PC-9 (cell line): ENCODE measurements at regions of chr1 and their contacts with region 1.

Region 1: GRCh38 chr1:172826096-172826743 is 167.3 kb downstream of the FASLG start:
- DNase-seq: peak; percentile 10 to 51
- H3K4me3 ChIP-seq: no peak overlapping the region
- H3K27ac ChIP-seq: no peak overlapping the region
- H3K4me1 ChIP-seq: no peaks in the 10 kb centered on the region
- H3K27me3 ChIP-seq: no peaks in the 10 kb centered on the region
- CTCF ChIP-seq: peak; percentile 76

Region 2: DNA sequence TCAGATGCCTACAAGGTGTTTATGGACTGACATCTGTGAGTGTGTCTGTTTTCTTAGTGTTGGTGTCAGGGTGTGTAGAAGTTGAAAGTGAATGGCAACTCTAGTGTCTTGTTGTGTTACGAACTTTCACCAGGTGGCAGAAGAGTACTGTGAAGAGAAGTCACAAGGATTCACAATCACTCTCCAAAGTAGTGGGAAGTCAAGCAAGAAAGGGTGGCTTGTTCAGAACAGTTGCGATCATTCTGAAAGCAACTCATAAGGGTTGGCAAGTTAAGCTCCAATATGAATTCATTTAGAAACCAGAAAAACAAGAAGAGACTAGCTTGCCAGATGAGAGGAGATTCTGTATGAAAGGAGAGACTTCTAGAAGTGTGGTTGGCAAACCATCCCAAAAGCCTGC is 81.2 kb before region 1 on chr1:
- CTCF ChIA-PET with region 1: no interaction called
- POLR2A ChIA-PET with region 1: no interaction called
- intact Hi-C with region 1: loop called (anchors 1 kb)
- DNase-seq: peak; percentile 38 to 66
- H3K4me3 ChIP-seq: no peak overlapping the region
- H3K27ac ChIP-seq: no peak overlapping the region
- H3K4me1 ChIP-seq: peaks cover 22% of the 10 kb centered on the region
- H3K27me3 ChIP-seq: 0 out of 2 replicates have a peak, but pooled peaks cover 5% of the 10 kb centered on the region
- CTCF ChIP-seq: peak; percentile 86

Region 3: GRCh38 chr1:172917972-172918371 is 91.8 kb after region 1 on chr1:
- CTCF ChIA-PET with region 1: no interaction called
- POLR2A ChIA-PET with region 1: no interaction called
- intact Hi-C with region 1: loop called (anchors 5 kb)
- DNase-seq: peak; percentile 63 to 97
- H3K4me3 ChIP-seq: peak overlapping the region; percentile 29
- H3K27ac ChIP-seq: peak overlapping the region; percentile 84
- H3K4me1 ChIP-seq: peaks cover 23% of the 10 kb centered on the region
- H3K27me3 ChIP-seq: no peaks in the 10 kb centered on the region
- CTCF ChIP-seq: no peak

Region 4: GRCh38 chr1:173062156-173062938 is 236.1 kb after region 1 on chr1:
- CTCF ChIA-PET with region 1: interaction called, 4 read pairs
- POLR2A ChIA-PET with region 1: no interaction called
- intact Hi-C with region 1: loop called (anchors 5 kb)
- DNase-seq: peak; percentile 51 to 96
- H3K4me3 ChIP-seq: no peak overlapping the region
- H3K27ac ChIP-seq: peak overlapping the region; percentile 32; the same call in 1 of the 2 replicates
- H3K4me1 ChIP-seq: peaks cover 36% of the 10 kb centered on the region
- H3K27me3 ChIP-seq: no peaks in the 10 kb centered on the region
- CTCF ChIP-seq: no peak

Region 5: DNA sequence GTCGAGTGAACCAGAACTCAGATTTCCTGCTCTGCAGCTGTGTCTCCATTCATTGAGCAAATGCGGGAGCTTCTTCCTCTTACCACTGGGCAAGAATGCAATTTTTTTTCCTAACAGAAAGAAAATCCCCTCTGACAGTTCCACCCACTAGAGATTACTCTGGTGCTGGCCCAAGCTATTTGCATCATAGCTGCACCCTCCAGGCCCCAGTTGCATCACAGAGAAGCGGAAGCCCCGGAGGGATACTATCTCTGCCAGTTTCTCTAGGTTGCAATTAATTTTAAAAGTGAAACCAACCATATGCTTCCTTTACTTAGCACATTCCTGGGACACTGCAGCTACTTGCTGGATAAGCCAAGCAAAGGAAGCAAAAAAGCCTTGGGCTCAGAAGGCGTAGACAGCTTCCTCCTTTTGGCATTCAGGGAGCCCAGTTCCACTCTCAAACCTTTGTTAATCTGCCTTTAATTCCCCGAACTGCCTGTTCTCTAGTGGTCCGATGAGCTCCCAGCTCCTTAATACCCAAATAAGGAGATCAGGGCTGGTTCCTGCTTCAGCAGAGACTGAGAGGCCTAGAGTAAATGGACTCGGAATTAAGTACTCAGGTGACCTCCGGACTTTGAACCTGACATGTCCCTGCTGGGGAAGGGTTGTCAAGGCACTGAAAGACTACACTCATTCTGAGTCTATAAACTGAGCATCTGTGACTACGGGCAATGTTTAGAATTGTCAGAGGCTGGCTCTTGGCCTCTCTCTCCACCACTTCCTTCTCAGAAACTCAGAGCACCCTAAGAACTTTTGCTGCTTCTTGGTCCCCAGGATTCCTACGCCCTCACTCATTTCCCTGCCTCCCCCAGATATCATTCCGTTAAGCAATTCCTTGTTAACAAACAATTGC is 297.0 kb after region 1 on chr1:
- CTCF ChIA-PET with region 1: no interaction called
- POLR2A ChIA-PET with region 1: no interaction called
- intact Hi-C with region 1: loop called (anchors 5 kb)
- DNase-seq: peak; percentile 69
- H3K4me3 ChIP-seq: no peak overlapping the region
- H3K27ac ChIP-seq: peak overlapping the region; percentile 54
- H3K4me1 ChIP-seq: peaks cover 15% of the 10 kb centered on the region
- H3K27me3 ChIP-seq: no peaks in the 10 kb centered on the region
- CTCF ChIP-seq: no peak

Region 6: GRCh38 chr1:173255214-173255813 is 429.1 kb after region 1 on chr1:
- CTCF ChIA-PET with region 1: no interaction called
- POLR2A ChIA-PET with region 1: no interaction called
- intact Hi-C with region 1: loop called (anchors 5 kb)
- DNase-seq: peak in 1 of 2 experiments; percentile 11
- H3K4me3 ChIP-seq: no peak overlapping the region
- H3K27ac ChIP-seq: no peak overlapping the region
- H3K4me1 ChIP-seq: no peaks in the 10 kb centered on the region
- H3K27me3 ChIP-seq: no peaks in the 10 kb centered on the region
- CTCF ChIP-seq: peak; percentile 86

Region 7: DNA sequence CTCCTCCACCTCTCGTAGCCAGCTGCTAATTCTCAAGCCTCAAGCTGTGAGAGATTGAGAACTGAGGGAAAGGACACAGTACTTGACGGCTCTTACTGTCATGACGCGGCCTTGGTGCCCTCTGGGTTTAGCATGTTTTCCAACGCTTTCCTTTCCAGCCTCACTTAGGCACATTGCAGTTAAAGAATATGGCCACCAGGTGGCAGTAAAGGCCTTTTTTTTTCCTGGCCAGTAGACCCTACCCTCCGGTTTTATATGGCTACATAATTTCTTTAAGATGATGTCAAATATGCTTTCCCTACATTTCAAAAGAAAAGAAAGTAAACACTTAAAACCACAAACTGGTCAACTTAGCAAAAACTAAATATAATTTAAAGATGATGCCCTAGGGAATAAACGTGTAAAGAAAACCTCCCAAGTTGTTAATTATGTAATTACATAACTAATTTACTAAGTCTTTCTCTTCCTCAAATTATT is 594.1 kb after region 1 on chr1:
- CTCF ChIA-PET with region 1: no interaction called
- POLR2A ChIA-PET with region 1: no interaction called
- intact Hi-C with region 1: loop called (anchors 5 kb)
- DNase-seq: peak; percentile 61 to 68
- H3K4me3 ChIP-seq: no peak overlapping the region
- H3K27ac ChIP-seq: no peak overlapping the region
- H3K4me1 ChIP-seq: peaks cover 36% of the 10 kb centered on the region
- H3K27me3 ChIP-seq: no peaks in the 10 kb centered on the region
- CTCF ChIP-seq: peak; percentile 95

Region 8: DNA sequence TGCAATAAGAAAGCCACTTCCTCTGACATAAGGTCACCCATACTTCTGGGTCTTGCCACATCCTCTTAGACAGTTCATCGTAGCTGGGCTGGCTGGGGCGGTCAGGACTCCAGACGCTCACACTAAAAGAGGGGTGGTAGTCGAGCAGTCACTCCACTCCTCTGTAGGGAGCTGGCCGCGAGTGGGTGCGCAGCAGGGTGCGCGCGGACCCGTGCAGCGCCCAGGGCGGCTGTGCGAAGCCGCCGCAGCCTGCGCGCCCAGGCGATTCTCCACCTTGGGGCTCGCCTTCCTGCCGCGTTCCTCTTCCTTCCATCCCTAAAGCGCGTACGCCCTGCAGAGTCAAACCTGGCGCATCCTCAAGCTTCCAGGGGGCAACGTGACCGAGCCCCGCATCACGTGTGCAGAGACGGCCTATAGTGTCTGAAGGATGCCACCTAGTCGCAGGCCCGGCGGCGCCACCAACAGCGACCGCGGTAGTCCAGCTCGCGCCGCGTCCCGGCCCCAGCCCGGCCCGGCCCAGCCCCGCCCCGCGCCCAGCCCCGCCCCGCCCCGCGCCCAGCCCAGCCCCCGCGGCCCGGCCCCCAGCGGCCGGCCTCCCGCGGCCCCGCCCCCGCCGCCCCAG is 650.6 kb after region 1 on chr1:
- CTCF ChIA-PET with region 1: no interaction called
- POLR2A ChIA-PET with region 1: no interaction called
- intact Hi-C with region 1: no loop called
- DNase-seq: peak; percentile 87 to 90
- H3K4me3 ChIP-seq: peak overlapping the region; percentile 99
- H3K27ac ChIP-seq: peak overlapping the region; percentile 74
- H3K4me1 ChIP-seq: peaks cover 50% of the 10 kb centered on the region
- H3K27me3 ChIP-seq: no peaks in the 10 kb centered on the region
- CTCF ChIP-seq: 0 out of 2 replicates have a peak, but pooled peaks have one; percentile 21